HepG2 (cell line): ENCODE measurements at regions of chr1 and their contacts with region 1.

Region 1: DNA sequence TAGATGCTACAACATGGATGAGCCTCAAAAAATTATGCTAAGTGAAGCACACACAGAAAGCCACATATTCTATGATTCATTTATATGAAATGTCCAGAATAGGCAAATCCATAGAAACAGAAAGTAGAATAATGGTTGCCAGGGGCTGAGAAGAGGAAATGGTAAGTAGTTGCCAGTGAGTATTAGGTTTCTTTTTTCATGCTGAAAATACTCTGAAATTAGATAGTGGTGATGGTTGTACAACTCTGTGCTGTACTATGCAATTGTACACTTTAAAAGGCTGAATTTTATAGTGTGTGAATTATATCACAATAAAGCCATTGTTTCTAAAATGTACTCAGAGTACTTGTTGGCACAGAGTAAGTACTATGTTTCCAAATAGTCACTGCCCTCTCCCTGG is 15.5 kb upstream of the GFI1 start:
- DNase-seq: no peak
- ATAC-seq: no peak
- H3K4me3 ChIP-seq: no peak overlapping the region
- H3K27ac ChIP-seq: no peak overlapping the region
- H3K4me1 ChIP-seq: peaks cover 37% of the 10 kb centered on the region
- H3K27me3 ChIP-seq: no peaks in the 10 kb centered on the region
- CTCF ChIP-seq: no peak
- EP300 ChIP-seq: no peak
- POLR2A ChIP-seq: no peak
- RAD21 ChIP-seq: no peak

Region 2: GRCh38 chr1:92441697-92442342 is 60.4 kb before region 1 on chr1:
- CTCF ChIA-PET with region 1: no interaction called
- POLR2A ChIA-PET with region 1: interaction called, 10 read pairs
- in situ Hi-C with region 1: no loop called
- intact Hi-C with region 1: no loop called
- DNase-seq: peak; percentile 96
- ATAC-seq: peak; percentile 98
- H3K4me3 ChIP-seq: peak overlapping the region; percentile 54 to 76 (median 61)
- H3K27ac ChIP-seq: peak overlapping the region; percentile 82
- H3K4me1 ChIP-seq: peaks cover 23% of the 10 kb centered on the region
- H3K27me3 ChIP-seq: peaks cover 0 to 4% of the 10 kb centered on the region in 2 experiments; a peak in 1 of 5 replicates
- CTCF ChIP-seq: no peak
- EP300 ChIP-seq: peak; percentile 25 to 80; a peak in 2 of 4 replicates
- POLR2A ChIP-seq: peak; percentile 90 to 92
- RAD21 ChIP-seq: no peak

Region 3: GRCh38 chr1:92536980-92537884 is 35.0 kb after region 1 on chr1:
- CTCF ChIA-PET with region 1: interaction called, 3 read pairs
- POLR2A ChIA-PET with region 1: interaction called, 22 read pairs
- in situ Hi-C with region 1: no loop called
- intact Hi-C with region 1: loop called (anchors 1 kb)
- DNase-seq: peak; percentile 94
- ATAC-seq: peak; percentile 83
- H3K4me3 ChIP-seq: peak overlapping the region in 1 of 3 experiments; percentile 6; a peak in 1 of 6 replicates
- H3K27ac ChIP-seq: peak overlapping the region; percentile 86
- H3K4me1 ChIP-seq: peaks cover 41% of the 10 kb centered on the region
- H3K27me3 ChIP-seq: no peaks in the 10 kb centered on the region
- CTCF ChIP-seq: no peak
- EP300 ChIP-seq: peak in 1 of 2 experiments; percentile 83; a peak in 2 of 4 replicates
- POLR2A ChIP-seq: no peak
- RAD21 ChIP-seq: no peak

Region 4: GRCh38 chr1:92551916-92552315 is 49.7 kb after region 1 on chr1:
- CTCF ChIA-PET with region 1: no interaction called
- POLR2A ChIA-PET with region 1: no interaction called
- in situ Hi-C with region 1: no loop called
- intact Hi-C with region 1: no loop called
- DNase-seq: no peak
- ATAC-seq: no peak
- H3K4me3 ChIP-seq: no peak overlapping the region
- H3K27ac ChIP-seq: no peak overlapping the region
- H3K4me1 ChIP-seq: no peaks in the 10 kb centered on the region
- H3K27me3 ChIP-seq: no peaks in the 10 kb centered on the region
- CTCF ChIP-seq: no peak
- EP300 ChIP-seq: no peak
- POLR2A ChIP-seq: no peak
- RAD21 ChIP-seq: no peak

Region 5: GRCh38 chr1:92563457-92564216 is 61.4 kb after region 1 on chr1:
- CTCF ChIA-PET with region 1: no interaction called
- POLR2A ChIA-PET with region 1: no interaction called
- in situ Hi-C with region 1: no loop called
- intact Hi-C with region 1: no loop called
- DNase-seq: no peak
- ATAC-seq: no peak
- H3K4me3 ChIP-seq: no peak overlapping the region
- H3K27ac ChIP-seq: no peak overlapping the region
- H3K4me1 ChIP-seq: no peaks in the 10 kb centered on the region
- H3K27me3 ChIP-seq: no peaks in the 10 kb centered on the region
- CTCF ChIP-seq: no peak
- EP300 ChIP-seq: no peak
- POLR2A ChIP-seq: no peak
- RAD21 ChIP-seq: no peak